Colonic mucosa (tissue), 4 donors: ENCODE measurements at regions of chr12 and their contacts with region 1.

Region 1: GRCh38 chr12:22624870-22625761 is at the start of gene ETNK1:
- DNase-seq: peak; percentile 96
- H3K4me3 ChIP-seq: peak within 1 kb of the TSS; percentile 66
- H3K27ac ChIP-seq: peak within 1 kb of the TSS; percentile 98
- H3K4me1 ChIP-seq: no peaks in the 10 kb centered on the region
- H3K27me3 ChIP-seq: no peaks in the 10 kb centered on the region
- CTCF ChIP-seq: no peak
- total RNA-seq, gene ETNK1: 82.4 to 115 TPM

Region 2: GRCh38 chr12:22543246-22544037 is 81.7 kb before region 1 on chr12:
- intact Hi-C with region 1: loop called (anchors 2 kb)
- DNase-seq: peak; percentile 88
- H3K4me3 ChIP-seq: peak overlapping the region; percentile 64
- H3K27ac ChIP-seq: peak overlapping the region; percentile 97
- H3K4me1 ChIP-seq: no peaks in the 10 kb centered on the region
- H3K27me3 ChIP-seq: no peaks in the 10 kb centered on the region
- CTCF ChIP-seq: no peak

Region 3: GRCh38 chr12:22588817-22589216 is 36.3 kb before region 1 on chr12:
- intact Hi-C with region 1: no loop called
- DNase-seq: peak; percentile 30
- H3K4me3 ChIP-seq: no peak overlapping the region
- H3K27ac ChIP-seq: no peak overlapping the region
- H3K4me1 ChIP-seq: no peaks in the 10 kb centered on the region
- H3K27me3 ChIP-seq: no peaks in the 10 kb centered on the region
- CTCF ChIP-seq: no peak

Region 4: DNA sequence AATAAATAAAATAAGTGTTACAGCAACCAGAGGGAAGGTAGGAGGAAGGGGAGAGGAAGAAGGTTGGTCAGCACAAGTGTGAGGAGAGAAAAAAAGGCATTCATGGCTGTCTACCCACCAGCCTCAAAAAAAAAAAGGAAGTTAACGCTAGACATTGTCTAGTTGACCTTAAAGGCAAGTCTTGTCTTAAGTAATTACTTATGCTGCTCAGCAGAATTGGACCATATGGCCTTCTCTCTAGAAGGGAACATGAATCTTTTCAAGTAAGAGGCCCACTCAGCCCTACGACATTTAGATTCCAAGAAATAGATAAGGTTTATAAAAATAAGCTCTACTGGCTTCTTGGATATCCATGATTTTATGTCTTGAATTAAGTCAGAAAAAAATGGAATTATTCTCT is 172.6 kb after region 1 on chr12:
- intact Hi-C with region 1: no loop called
- DNase-seq: no peak
- H3K4me3 ChIP-seq: no peak overlapping the region
- H3K27ac ChIP-seq: no peak overlapping the region
- H3K4me1 ChIP-seq: no peaks in the 10 kb centered on the region
- H3K27me3 ChIP-seq: no peaks in the 10 kb centered on the region
- CTCF ChIP-seq: no peak